ENCODE measurements at regions of chr9 and their contacts with region 1.

Region 1: GRCh38 chr9:4814913-4815312 is 22.2 kb downstream of the RCL1 start:
- DNase-seq: no peak
- H3K4me3 ChIP-seq: no peak overlapping the region
- H3K27ac ChIP-seq: no peak overlapping the region
- H3K27me3 ChIP-seq: no peaks in the 10 kb centered on the region
- CTCF ChIP-seq: no peak

Region 2: GRCh38 chr9:4706971-4707622 is 107.8 kb before region 1 on chr9:
- CTCF ChIA-PET with region 1: no interaction called
- POLR2A ChIA-PET with region 1: no interaction called
- DNase-seq: no peak
- H3K4me3 ChIP-seq: no peak overlapping the region
- H3K27ac ChIP-seq: no peak overlapping the region
- H3K27me3 ChIP-seq: no peaks in the 10 kb centered on the region
- CTCF ChIP-seq: no peak

Region 3: DNA sequence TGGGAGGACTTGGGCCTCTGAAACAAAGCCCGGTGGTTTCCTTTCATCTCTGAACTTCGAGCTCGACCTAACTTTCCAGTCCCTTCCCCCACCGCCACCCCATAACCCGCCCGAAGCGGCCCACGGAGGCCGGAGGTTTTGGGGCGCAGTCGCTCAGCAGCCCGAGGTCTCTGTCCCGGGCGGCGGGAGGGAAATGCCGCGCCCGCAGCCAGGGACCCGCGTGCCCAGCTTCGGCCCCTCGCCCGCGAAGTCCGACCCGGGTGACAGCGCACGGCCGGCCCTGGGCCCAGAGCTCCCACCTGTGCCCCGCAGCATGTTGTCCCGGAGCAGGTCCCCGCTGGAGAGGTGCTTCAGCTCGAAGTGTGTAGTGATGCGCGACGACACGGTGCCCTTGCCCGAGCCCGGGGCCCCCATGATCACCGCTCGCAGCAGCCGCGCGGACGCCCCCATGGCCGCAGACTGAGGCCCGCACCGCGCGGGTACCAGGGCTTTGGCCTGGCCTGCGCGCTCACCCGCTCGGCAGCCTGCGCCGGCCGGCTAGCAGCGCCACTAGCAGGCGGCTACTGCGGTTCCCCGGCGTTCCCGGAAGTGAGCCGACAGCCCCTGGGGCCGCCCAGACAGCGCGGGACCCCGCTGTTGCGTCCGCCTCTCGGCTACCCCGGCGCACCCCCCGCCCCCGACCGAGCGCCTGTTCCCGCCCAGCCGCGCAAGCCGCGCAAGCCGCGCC is 74.1 kb before region 1 on chr9 and contains the start of gene AK3:
- CTCF ChIA-PET with region 1: no interaction called
- POLR2A ChIA-PET with region 1: interaction called, 15 read pairs
- DNase-seq: peak; percentile 66
- H3K4me3 ChIP-seq: peak within 1 kb of the TSS; percentile 84
- H3K27ac ChIP-seq: peak within 1 kb of the TSS; percentile 39
- H3K27me3 ChIP-seq: no peaks in the 10 kb centered on the region
- CTCF ChIP-seq: peak; percentile 25; the same call in 1 of the 2 replicates
- polyA plus RNA-seq, gene AK3: 52.1 and 70.3 TPM in 2 replicates

Region 4: DNA sequence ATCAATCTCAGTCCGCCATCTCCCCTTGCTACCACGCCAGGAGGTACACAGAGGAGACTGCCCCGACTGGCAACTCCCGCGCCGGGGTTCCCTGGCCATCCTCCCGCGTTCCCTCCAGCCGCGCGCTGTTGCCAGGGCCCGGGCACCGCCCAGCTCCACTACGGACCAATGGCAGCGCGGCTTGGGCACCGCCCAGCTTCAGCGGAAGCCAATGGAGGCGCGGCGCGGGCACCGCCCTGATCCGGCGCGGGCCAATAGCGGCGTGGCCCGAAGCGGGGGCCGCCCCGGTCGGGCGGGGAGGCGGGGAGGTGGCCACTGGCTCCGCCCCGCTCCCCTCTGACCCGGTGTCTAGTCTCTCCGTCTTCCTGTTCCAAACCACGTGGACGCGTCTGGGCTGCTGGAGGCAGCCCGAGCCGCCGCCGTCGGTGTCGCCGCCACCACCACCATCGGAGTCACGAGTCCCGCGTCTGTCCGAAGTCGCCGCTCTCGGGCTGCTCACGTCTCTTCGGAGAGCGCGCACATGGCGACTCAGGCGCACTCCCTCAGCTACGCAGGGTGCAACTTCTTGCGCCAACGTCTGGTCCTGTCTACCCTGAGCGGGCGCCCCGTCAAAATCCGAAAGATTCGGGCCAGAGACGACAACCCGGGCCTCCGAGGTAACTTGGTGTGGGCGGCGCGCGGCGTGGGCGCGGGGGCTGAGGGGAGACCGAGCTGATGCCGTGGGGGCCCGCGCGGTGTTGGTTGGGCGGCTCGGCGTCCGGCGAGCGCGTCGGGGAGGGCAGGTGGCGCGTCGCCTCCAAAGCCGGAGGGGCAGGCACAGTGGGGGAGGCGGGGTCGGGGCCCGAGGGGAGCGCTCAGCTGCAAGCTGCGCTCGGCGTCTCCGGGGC is 22.1 kb before region 1 on chr9 and contains the start of gene RCL1:
- CTCF ChIA-PET with region 1: interaction called, 10 read pairs
- POLR2A ChIA-PET with region 1: no interaction called
- DNase-seq: peak; percentile 80
- H3K4me3 ChIP-seq: peak within 1 kb of the TSS; percentile 94
- H3K27ac ChIP-seq: peak within 1 kb of the TSS; percentile 47
- H3K27me3 ChIP-seq: no peaks in the 10 kb centered on the region
- CTCF ChIP-seq: no peak
- polyA plus RNA-seq, gene RCL1: 7.0 and 7.8 TPM in 2 replicates

Measured in AG04450 (cell line).